K562 (cell line): ENCODE measurements at regions of chr4 and their contacts with region 1.

Region 1: DNA sequence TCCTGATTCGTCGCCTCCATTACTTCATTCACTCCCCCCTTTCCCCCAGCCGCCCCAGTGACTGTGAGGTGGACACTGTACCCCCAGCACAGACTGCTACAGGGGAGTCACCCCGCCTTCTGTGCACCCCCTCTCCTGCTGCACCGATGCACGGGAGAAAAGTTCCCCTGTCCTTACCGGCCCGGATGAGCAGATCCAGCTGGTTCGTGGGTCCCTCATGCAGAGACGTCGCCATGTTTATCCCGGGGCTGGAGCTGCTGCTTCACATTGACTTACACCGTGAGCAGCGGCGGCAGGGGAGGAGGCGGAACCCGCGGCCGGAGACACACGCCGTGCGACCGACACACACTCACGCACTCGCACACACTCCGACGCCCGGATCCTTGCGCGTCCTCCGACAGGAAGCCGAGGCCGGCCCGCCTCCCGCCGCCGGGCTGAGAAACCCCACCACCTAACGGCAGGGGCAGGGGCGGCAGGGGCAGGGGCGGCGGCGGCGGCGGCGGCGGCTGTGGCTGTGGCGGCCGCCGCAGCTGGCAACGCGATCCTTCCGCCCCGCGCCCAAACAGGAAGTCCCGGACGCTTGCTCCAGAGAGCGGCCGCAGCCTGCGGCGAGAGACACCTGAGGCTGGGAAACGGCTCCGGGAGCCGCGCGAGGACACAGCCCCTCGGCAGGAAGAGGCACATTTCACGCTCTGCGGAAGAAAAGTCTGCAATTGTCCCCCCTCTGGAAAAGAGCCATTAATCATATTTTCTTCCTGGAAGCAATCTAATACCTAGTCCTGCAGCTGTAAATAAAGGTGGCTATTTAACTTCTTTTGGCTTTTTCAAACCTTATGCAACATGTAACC is 68.6 kb downstream of the NOCT start:
- DNase-seq: peak; percentile 70 to 92 (median 75)
- ATAC-seq: peak; percentile 72
- H3K4me3 ChIP-seq: peak overlapping the region; percentile 85
- H3K27ac ChIP-seq: peak overlapping the region; percentile 98
- H3K4me1 ChIP-seq: peaks cover 6 to 8% of the 10 kb centered on the region in 2 experiments; a peak in 4 of 5 replicates
- H3K27me3 ChIP-seq: no peaks in the 10 kb centered on the region
- CTCF ChIP-seq: peak in 2 of 3 experiments; percentile 16 to 46; a peak in 2 of 6 replicates
- EP300 ChIP-seq: no peak
- POLR2A ChIP-seq: peak; percentile 85
- RAD21 ChIP-seq: no peak

Region 2: GRCh38 chr4:138977524-138977923 is 106.7 kb before region 1 on chr4:
- CTCF ChIA-PET with region 1: no interaction called
- POLR2A ChIA-PET with region 1: no interaction called
- in situ Hi-C with region 1: no loop called
- intact Hi-C with region 1: no loop called
- DNase-seq: no peak
- ATAC-seq: no peak
- H3K4me3 ChIP-seq: no peak overlapping the region
- H3K27ac ChIP-seq: no peak overlapping the region
- H3K4me1 ChIP-seq: 0 out of 5 replicates have a peak, but pooled peaks cover 0 to 2% of the 10 kb centered on the region in 2 experiments
- H3K27me3 ChIP-seq: no peaks in the 10 kb centered on the region
- CTCF ChIP-seq: no peak
- EP300 ChIP-seq: no peak
- POLR2A ChIP-seq: no peak
- RAD21 ChIP-seq: no peak

Region 3: DNA sequence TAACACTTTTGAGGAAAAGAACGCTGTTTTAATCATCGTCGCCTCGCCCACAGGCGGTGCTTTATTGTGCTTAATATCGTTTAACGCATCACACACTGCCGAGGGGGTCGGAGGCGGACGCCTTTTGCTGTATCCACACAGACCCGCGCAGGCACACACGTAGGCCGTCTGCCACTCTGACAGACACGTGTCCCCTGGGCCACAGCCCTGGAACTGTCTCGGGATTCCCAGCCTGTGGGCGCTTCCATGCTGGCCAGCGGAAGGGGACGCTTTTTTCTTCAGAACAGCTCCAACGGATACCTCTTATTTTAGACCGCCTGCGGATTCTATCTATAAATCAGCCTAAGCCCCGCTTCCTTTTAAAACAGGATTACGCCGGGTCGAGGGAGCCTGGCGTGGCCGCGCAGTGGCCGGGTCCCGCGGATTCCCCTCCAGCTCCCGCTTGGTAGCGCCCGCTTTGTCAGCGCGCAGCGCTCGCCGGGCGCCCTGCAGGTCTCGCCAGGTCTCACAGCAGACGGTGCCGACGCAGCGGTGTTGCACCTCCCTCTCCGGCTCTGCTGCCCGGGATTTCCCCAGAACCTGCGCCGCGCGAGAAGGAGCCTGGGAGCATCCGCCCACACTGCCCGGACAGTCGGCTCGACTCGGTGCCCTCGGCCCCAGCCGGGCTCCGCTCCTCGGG is 68.8 kb before region 1 on chr4 and contains the start of gene NOCT:
- CTCF ChIA-PET with region 1: no interaction called
- POLR2A ChIA-PET with region 1: interaction called, 3 read pairs
- in situ Hi-C with region 1: no loop called
- intact Hi-C with region 1: loop called (anchors 5 kb)
- DNase-seq: peak; percentile 86 to 92 (median 88)
- ATAC-seq: peak; percentile 94
- H3K4me3 ChIP-seq: peak within 1 kb of the TSS; percentile 92
- H3K27ac ChIP-seq: peak within 1 kb of the TSS; percentile 92
- H3K4me1 ChIP-seq: peaks cover 24 to 32% of the 10 kb centered on the region in 2 experiments; a peak in 4 of 5 replicates
- H3K27me3 ChIP-seq: no peaks in the 10 kb centered on the region
- CTCF ChIP-seq: peak in 1 of 3 experiments; percentile 4; a peak in 1 of 6 replicates
- EP300 ChIP-seq: no peak; the same call in 1 of the 2 replicates
- POLR2A ChIP-seq: peak; percentile 91
- RAD21 ChIP-seq: no peak
- polyA plus RNA-seq, gene NOCT: 1.3 to 2.8 TPM

Region 4: GRCh38 chr4:139036885-139037284 is 47.3 kb before region 1 on chr4:
- CTCF ChIA-PET with region 1: no interaction called
- POLR2A ChIA-PET with region 1: no interaction called
- in situ Hi-C with region 1: no loop called
- intact Hi-C with region 1: no loop called
- DNase-seq: no peak
- ATAC-seq: no peak
- H3K4me3 ChIP-seq: no peak overlapping the region
- H3K27ac ChIP-seq: no peak overlapping the region
- H3K4me1 ChIP-seq: no peaks in the 10 kb centered on the region
- H3K27me3 ChIP-seq: no peaks in the 10 kb centered on the region
- CTCF ChIP-seq: no peak
- EP300 ChIP-seq: no peak
- POLR2A ChIP-seq: no peak
- RAD21 ChIP-seq: no peak